ENCODE measurements at regions of chr20 and their contacts with region 1.

Region 1: DNA sequence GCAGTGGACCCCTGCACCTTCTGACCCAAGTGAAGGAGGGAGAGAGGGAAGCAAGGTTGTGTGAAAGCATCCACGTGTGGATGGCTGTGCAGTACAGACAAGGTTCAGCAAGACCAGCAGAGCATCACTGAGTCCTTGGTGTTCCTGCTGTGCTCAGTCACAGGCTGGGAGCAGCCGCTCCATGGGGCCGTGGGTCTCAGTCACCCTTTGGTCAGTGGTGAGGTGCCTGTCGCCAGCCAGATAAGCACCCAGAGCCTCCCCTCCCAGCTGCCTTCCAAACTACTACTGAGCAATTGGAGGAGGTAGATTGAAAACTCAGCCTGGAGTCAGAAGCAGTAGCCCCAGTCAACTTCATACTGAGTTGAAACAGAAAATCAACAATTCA is 218.9 kb downstream of the SLC24A3 start:
- DNase-seq: no peak
- ATAC-seq: no peak
- H3K4me3 ChIP-seq: no peak overlapping the region
- H3K4me3 Mint-ChIP-seq: no peak overlapping the region
- H3K27ac ChIP-seq: no peak overlapping the region
- H3K27ac Mint-ChIP-seq: no peak overlapping the region
- H3K4me1 ChIP-seq: no peaks in the 10 kb centered on the region
- H3K4me1 Mint-ChIP-seq: peaks cover 0 to 2% (median 0%) of the 10 kb centered on the region in 7 donors
- H3K27me3 ChIP-seq: no peaks in the 10 kb centered on the region
- H3K27me3 Mint-ChIP-seq: peaks cover 0 to 10% (median 0%) of the 10 kb centered on the region in 5 donors

Region 2: GRCh38 chr20:17682103-17682888 is 1749.0 kb before region 1 on chr20 and contains the start of gene RRBP1:
- CTCF ChIA-PET with region 1: no interaction called
- POLR2A ChIA-PET with region 1: no interaction called
- intact Hi-C with region 1: no loop called
- DNase-seq: peak; percentile 89 to 97 (median 97)
- ATAC-seq: peak; percentile 94
- H3K4me3 ChIP-seq: peak within 1 kb of the TSS; percentile 80
- H3K4me3 Mint-ChIP-seq: peak within 1 kb of the TSS; percentile 86 to 93 (median 90)
- H3K27ac ChIP-seq: peak within 1 kb of the TSS; percentile 74
- H3K27ac Mint-ChIP-seq: peak within 1 kb of the TSS; percentile 71 to 92 (median 86)
- H3K4me1 ChIP-seq: peaks cover 0 to 18% of the 10 kb centered on the region in 2 donors
- H3K4me1 Mint-ChIP-seq: peaks cover 20 to 26% (median 24%) of the 10 kb centered on the region in 7 donors
- H3K27me3 ChIP-seq: peaks cover 0 to 4% of the 10 kb centered on the region in 2 donors
- H3K27me3 Mint-ChIP-seq: peaks cover 22 to 42% (median 33%) of the 10 kb centered on the region in 5 donors
- total RNA-seq, gene RRBP1: 27.8 to 73.9 (median 29.1) TPM

Region 3: GRCh38 chr20:19405958-19406735 is 25.2 kb before region 1 on chr20:
- CTCF ChIA-PET with region 1: no interaction called
- POLR2A ChIA-PET with region 1: no interaction called
- intact Hi-C with region 1: loop called in 1 of 2 experiments (anchors 2 kb)
- DNase-seq: no peak
- ATAC-seq: no peak
- H3K4me3 ChIP-seq: no peak overlapping the region
- H3K4me3 Mint-ChIP-seq: no peak overlapping the region
- H3K27ac ChIP-seq: no peak overlapping the region
- H3K27ac Mint-ChIP-seq: no peak overlapping the region
- H3K4me1 ChIP-seq: no peaks in the 10 kb centered on the region
- H3K4me1 Mint-ChIP-seq: no peaks in the 10 kb centered on the region
- H3K27me3 ChIP-seq: no peaks in the 10 kb centered on the region
- H3K27me3 Mint-ChIP-seq: peaks cover 0 to 22% (median 5%) of the 10 kb centered on the region in 5 donors

Region 4: DNA sequence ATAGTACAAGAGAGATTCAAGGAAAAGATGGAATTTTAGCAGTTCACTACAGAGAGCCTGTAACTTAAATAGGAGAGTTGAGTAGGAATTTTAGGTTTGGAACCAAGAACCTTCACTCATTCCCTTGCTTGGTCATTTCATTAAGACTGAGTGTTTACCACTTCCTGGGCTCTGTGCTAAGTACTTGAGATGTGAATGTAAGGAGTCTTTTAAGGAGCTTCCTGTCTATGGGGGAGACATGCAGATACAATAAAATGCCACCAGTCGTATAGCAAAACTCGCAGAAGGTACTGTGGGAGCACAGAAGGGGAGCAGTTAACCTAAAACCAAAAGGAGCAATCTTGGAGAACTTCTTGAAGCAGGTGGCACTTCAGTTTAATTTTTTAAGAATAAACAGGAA is 14.7 kb before region 1 on chr20:
- CTCF ChIA-PET with region 1: no interaction called
- POLR2A ChIA-PET with region 1: no interaction called
- intact Hi-C with region 1: no loop called
- DNase-seq: no peak
- ATAC-seq: no peak
- H3K4me3 ChIP-seq: no peak overlapping the region
- H3K4me3 Mint-ChIP-seq: no peak overlapping the region
- H3K27ac ChIP-seq: no peak overlapping the region
- H3K27ac Mint-ChIP-seq: no peak overlapping the region
- H3K4me1 ChIP-seq: no peaks in the 10 kb centered on the region
- H3K4me1 Mint-ChIP-seq: peaks cover 0 to 3% (median 0%) of the 10 kb centered on the region in 7 donors
- H3K27me3 ChIP-seq: no peaks in the 10 kb centered on the region
- H3K27me3 Mint-ChIP-seq: peaks cover 0 to 5% (median 0%) of the 10 kb centered on the region in 5 donors

Measured in naive thymus-derived CD4-positive, alpha-beta T cell (primary cell).